Activated CD4-positive, alpha-beta T cell treated with anti-CD3 and anti-CD28 coated beads, Interleukin-2, amount 10 ng/mL, durations not matched to agents 24 days and 14 days (primary cell): ENCODE measurements at regions of chr3 and their contacts with region 1.

Region 1: DNA sequence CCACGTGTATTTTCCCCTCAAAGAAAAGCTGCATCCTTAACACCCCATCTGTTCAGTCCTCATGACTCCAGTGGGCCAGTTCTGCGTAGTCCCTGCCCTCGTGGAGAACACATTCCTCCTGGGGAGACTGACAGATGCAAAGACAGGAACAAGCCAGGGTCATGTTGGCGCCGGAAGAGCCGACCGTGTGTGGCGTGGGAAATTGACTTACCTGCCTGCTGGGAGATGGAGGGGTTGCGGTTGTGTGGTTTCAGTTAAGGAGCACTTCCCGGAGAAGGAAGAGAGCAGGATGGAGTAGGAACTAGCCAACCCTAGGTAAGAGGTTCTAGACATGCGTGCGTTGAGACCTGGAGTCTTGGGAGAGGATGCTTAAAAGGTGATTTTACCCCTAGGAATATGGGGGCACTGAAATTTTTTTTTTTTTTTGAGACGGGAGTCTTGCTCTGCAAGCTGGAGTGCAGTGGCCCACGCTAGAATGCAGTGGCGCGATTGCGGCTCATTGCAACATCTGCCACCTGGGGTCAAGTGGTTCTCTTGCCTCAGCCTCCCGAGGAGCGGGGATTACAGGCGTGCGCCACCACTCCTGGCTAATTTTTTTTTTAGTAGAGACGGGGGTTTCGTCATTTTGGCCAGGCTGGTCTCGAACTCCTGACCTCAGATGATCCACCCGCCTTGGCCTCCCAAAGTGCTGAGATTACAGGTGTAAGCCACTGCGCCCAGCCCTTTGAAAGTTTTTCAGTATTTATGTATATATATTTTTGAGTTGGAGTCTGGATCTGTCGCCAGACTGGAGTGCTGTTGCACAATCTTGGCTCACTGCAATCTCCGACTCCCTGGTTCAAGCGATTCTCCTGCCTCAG is 1.4 kb downstream of the VHL start:
- DNase-seq: peak; percentile 72
- H3K4me3 Mint-ChIP-seq: peak overlapping the region; percentile 96
- H3K27ac Mint-ChIP-seq: peak overlapping the region; percentile 88
- H3K4me1 Mint-ChIP-seq: peaks cover 26% of the 10 kb centered on the region
- H3K27me3 Mint-ChIP-seq: no peaks in the 10 kb centered on the region

Region 2: DNA sequence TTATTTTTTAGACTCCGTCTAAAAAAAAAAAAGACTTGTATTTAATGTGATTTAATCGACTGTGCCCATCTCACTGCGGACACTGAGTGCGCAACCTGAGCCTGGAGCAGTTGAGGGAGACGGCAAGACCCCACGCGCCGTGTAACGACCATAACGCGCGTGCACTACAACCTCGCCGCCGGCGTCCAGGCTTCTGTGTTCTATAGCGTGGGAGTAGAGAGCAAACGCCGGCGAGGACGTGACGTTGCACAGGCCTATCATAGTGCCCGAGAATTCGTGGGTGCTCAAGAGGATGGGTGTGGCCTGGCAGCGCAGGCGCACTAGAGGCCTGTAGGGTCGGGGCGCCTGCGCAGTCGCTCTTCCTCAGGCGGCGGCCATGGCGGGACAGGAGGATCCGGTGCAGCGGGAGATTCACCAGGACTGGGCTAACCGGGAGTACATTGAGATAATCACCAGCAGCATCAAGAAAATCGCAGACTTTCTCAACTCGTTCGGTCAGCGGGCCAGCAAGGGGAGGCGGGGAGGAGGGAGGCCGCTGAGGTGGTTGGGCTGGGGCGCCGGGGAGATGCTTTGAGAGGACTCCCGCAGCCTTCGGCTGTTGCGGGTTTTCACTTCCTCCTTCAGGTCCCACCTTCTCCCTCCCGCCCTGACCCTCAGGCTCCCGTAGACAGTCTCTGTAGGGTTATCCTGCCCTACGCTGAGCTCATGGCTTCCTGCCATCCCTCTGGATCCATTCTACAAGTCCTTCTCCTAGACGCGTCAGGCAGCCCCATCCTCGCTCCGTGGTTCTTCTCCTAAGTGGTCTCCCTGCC is 27.4 kb before region 1 on chr3 and contains the start of gene BRK1:
- intact Hi-C with region 1: loop called (anchors 1 kb)
- DNase-seq: peak; percentile 97
- H3K4me3 Mint-ChIP-seq: peak within 1 kb of the TSS; percentile 98
- H3K27ac Mint-ChIP-seq: peak within 1 kb of the TSS; percentile 93
- H3K4me1 Mint-ChIP-seq: peaks cover 25% of the 10 kb centered on the region
- H3K27me3 Mint-ChIP-seq: peaks cover 2% of the 10 kb centered on the region
- total RNA-seq, gene BRK1: 98.8 and 99.6 TPM in 2 replicates